ENCODE measurements at regions of chr6 and their contacts with region 1.

Region 1: DNA sequence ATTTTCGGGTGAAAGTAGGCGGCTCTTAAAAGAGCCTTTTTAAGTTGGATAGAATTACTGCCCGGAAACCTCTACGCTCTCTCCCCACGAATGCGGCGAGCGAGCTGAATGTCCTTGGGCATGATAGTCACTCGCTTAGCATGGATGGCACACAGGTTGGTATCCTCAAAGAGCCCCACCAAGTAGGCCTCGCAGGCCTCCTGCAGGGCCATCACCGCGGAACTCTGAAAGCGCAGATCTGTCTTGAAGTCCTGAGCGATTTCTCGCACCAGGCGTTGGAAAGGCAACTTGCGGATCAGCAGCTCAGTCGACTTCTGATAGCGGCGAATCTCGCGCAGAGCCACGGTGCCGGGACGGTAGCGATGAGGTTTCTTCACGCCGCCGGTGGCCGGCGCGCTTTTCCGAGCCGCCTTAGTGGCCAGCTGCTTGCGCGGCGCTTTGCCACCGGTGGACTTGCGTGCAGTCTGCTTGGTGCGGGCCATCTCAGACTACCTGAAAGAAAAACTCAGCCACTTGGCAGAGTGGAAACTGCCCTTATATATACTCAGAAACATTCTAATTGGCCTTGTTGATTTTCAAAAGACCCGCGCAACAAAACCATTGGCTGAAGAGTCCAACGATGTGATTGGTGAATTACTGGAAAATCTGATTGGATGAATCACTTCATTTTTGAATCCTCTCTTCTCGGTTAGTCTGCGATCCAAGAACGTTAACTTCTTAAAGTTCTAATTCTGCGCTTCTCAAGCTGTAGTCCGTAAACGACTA is 93.9 kb upstream of the BTN3A2 start:
- DNase-seq: peak; percentile 91
- CTCF ChIP-seq: no peak

Region 2: GRCh38 chr6:26045065-26045927 is 225.8 kb before region 1 on chr6:
- CTCF ChIA-PET with region 1: no interaction called
- POLR2A ChIA-PET with region 1: interaction called, 17 read pairs
- DNase-seq: peak; percentile 88
- CTCF ChIP-seq: peak; percentile 12

Region 3: DNA sequence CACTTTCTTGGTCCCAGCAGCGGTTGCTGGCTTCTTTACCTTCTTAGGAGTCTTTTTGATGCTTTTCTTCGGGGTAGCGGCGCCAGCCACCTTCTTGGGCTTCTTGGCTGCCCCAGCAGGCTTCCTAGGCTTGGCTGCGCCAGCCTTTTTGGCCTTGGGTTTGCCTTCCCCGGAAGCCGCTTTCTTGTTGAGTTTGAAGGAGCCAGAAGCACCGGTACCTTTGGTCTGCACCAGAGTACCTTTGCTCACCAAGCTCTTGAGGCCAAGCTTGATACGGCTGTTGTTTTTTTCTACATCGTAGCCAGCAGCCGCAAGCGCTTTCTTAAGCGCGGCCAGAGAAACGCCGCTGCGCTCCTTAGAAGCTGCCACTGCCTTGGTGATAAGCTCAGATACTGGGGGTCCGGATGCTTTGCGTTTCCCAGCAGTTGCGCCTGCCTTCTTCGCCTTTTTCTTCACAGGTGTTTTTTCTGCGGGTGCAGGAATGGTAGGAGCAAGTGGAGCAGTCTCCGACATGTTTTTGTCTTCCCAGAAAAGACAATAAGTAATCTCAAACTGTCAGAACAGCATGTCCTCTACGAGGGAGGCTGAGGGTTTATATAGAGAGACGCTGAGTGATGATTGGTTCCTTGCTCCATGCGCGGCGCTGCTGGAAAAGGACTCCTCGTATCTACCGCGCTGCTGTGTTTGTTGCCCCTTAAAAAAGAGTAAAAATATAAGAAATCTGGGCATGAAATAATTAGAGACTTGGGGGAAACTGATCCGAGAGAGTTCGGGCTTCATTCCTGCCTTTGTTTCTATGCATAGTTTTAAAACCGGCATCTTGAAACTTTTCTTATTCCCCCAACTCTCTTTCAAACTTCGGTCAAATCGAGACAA is 36.4 kb before region 1 on chr6:
- CTCF ChIA-PET with region 1: interaction called, 8 read pairs
- POLR2A ChIA-PET with region 1: interaction called, 22 read pairs
- DNase-seq: peak; percentile 73
- CTCF ChIP-seq: no peak

Region 4: DNA sequence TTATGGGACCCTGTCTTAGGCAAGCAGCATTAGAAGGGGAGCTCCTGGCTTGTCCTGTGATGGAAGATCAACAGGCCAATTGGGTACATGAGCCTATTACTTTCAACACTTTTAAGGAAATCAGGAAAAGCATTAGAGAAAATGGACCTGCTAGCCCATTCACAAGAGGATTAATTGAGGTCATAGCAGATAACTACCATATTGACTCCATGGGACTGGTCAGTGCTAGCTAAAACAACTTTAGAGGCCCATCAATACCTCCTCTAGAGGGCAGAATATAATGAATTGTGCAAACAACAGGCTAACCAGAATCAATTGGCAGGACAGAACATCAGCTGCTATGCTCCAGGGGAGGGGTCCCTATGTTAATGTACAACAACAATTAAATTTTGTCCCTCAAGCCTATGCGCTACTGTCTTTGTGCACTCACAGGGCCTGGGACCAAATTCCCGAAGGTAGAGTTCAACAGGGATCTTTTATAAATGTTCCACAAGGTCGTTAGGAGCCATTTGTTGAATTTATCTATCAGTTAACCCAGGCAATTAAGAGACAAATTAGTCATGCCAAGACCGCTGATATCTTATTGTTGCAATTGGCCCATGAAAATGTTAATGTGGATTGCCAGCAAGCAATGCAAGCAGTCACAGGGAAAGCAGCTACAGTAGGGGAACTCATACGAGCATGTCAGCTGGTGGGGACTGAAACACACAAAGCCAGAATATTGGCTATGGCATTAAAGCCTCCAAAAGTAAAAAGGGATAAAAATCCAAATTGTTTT is 12.7 kb before region 1 on chr6:
- CTCF ChIA-PET with region 1: interaction called, 133 read pairs
- POLR2A ChIA-PET with region 1: interaction called, 9 read pairs
- DNase-seq: no peak
- CTCF ChIP-seq: peak; percentile 35

Region 5: GRCh38 chr6:26507658-26508057 is 236.6 kb after region 1 on chr6:
- CTCF ChIA-PET with region 1: no interaction called
- POLR2A ChIA-PET with region 1: no interaction called
- DNase-seq: no peak
- CTCF ChIP-seq: no peak

Region 6: DNA sequence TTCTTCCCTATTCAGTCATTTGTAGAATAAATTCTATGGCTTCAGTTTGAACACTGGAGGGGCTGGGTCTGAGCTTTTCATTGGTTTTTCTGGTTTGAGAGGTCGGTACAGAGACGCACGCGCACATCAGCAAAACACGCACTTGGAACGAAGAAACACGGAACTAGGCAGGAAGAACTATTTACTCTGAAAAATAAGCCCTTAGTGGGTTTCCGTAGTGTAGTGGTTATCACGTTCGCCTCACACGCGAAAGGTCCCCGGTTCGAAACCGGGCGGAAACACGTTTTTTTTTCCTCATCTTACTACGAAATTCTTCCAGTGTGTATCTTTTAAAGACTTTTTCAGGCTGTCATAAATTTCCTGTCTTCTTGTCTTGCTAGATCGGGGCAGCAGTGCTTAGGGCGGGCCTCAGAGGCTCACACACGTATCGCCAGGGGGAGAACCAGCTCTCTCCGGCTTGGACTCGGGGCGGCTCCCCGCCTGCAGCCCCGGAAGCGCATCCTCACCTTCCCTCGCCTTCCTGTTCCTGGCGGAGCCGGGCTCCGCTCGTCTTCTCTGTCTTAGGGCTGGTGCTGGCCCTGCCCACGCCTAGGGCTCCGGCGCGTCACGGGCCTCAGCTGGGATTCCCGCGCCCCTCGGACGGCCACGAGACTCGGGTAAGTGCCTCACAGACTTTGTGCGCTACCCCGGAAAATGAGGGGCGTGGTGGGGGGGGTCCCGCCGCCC is 266.9 kb after region 1 on chr6 and contains the start of gene HMGN4:
- CTCF ChIA-PET with region 1: no interaction called
- POLR2A ChIA-PET with region 1: interaction called, 10 read pairs
- DNase-seq: peak; percentile 82
- CTCF ChIP-seq: no peak